Caco-2 (cell line): ENCODE measurements at regions of chr13 and their contacts with region 1.

Region 1: GRCh38 chr13:59250276-59251047 is 913.3 kb downstream of the DIAPH3 start:
- DNase-seq: no peak
- H3K4me3 ChIP-seq: no peak overlapping the region
- H3K4me3 Mint-ChIP-seq: no peak overlapping the region
- H3K27ac Mint-ChIP-seq: no peak overlapping the region
- H3K4me1 ChIP-seq: peaks cover 9% of the 10 kb centered on the region
- H3K4me1 Mint-ChIP-seq: no peaks in the 10 kb centered on the region
- H3K27me3 ChIP-seq: no peaks in the 10 kb centered on the region; the same call in 1 of the 2 replicates
- H3K27me3 Mint-ChIP-seq: peaks cover 8% of the 10 kb centered on the region
- CTCF ChIP-seq: no peak

Region 2: DNA sequence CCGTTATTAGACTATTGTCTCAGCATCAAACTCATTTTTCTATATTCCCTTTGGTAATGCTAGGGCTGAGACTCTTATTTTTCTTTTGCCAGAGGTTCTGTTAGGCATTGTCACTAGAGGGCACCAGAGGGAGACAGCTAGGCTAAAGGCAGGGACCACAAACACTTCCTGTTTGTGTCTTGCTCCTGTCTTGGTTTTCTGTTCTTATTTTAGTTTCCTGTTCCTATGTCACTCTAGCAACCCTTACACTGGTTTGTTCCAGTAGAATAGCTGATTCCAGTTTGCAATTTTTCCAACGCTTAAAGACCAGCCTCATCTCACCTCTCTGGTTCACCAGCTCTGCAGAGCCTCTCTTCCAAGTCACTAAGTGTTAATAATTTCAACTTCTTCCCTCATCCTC is 141.2 kb after region 1 on chr13:
- CTCF ChIA-PET with region 1: no interaction called
- POLR2A ChIA-PET with region 1: no interaction called
- intact Hi-C with region 1: no loop called
- DNase-seq: peak; percentile 57 to 76
- H3K4me3 ChIP-seq: no peak overlapping the region
- H3K4me3 Mint-ChIP-seq: no peak overlapping the region
- H3K27ac Mint-ChIP-seq: no peak overlapping the region
- H3K4me1 ChIP-seq: no peaks in the 10 kb centered on the region
- H3K4me1 Mint-ChIP-seq: peaks cover 6% of the 10 kb centered on the region
- H3K27me3 ChIP-seq: no peaks in the 10 kb centered on the region
- H3K27me3 Mint-ChIP-seq: no peaks in the 10 kb centered on the region
- CTCF ChIP-seq: peak; percentile 86 to 89

Region 3: GRCh38 chr13:60351326-60351725 is 1100.9 kb after region 1 on chr13:
- CTCF ChIA-PET with region 1: no interaction called
- POLR2A ChIA-PET with region 1: no interaction called
- intact Hi-C with region 1: loop called (anchors 5 kb)
- DNase-seq: no peak
- H3K4me3 ChIP-seq: no peak overlapping the region
- H3K4me3 Mint-ChIP-seq: no peak overlapping the region
- H3K27ac Mint-ChIP-seq: no peak overlapping the region
- H3K4me1 ChIP-seq: no peaks in the 10 kb centered on the region
- H3K4me1 Mint-ChIP-seq: no peaks in the 10 kb centered on the region
- H3K27me3 ChIP-seq: no peaks in the 10 kb centered on the region
- H3K27me3 Mint-ChIP-seq: peaks cover 3% of the 10 kb centered on the region
- CTCF ChIP-seq: no peak